AG04450 (cell line): ENCODE measurements at regions of chr4 and their contacts with region 1.

Region 1: DNA sequence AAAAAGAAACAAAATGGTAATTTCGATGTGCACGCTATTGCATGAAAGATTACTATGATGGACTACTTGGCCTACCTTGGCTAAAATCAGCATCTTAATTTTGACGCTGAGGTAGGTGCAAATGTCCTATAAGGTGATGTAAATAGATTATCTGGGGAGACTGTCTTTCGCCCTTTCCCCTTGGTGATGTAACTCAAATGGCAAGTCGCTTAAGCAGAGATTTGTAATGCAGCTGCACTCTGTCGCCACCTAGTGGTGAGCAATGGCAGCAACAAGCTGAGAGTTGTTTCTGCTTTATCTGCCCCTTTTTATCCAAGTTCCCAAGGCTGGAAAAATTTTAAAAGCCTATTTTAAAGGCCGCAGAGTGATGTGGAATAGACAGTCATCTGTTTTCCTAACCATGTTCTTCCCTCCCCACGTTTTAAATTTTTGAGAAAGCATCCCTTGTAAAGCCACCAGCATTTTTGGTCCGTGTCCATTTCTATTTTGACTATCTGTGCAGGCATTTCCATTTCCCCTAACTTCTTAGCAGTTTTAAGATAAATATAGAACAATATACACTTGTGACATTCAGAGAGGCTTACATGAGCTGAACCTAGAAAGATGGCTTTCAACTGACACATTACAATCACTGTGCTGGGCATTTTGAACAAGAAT is 62.4 kb upstream of the PDLIM3 start:
- DNase-seq: peak; percentile 55
- H3K4me3 ChIP-seq: no peak overlapping the region
- H3K27ac ChIP-seq: no peak overlapping the region
- H3K27me3 ChIP-seq: peaks cover 2% of the 10 kb centered on the region
- CTCF ChIP-seq: peak; percentile 99

Region 2: GRCh38 chr4:185464184-185464583 is 133.5 kb before region 1 on chr4:
- CTCF ChIA-PET with region 1: interaction called, 13 read pairs
- POLR2A ChIA-PET with region 1: interaction called, 3 read pairs
- DNase-seq: no peak
- H3K4me3 ChIP-seq: no peak overlapping the region
- H3K27ac ChIP-seq: no peak overlapping the region
- H3K27me3 ChIP-seq: peaks cover 4% of the 10 kb centered on the region
- CTCF ChIP-seq: no peak

Region 3: DNA sequence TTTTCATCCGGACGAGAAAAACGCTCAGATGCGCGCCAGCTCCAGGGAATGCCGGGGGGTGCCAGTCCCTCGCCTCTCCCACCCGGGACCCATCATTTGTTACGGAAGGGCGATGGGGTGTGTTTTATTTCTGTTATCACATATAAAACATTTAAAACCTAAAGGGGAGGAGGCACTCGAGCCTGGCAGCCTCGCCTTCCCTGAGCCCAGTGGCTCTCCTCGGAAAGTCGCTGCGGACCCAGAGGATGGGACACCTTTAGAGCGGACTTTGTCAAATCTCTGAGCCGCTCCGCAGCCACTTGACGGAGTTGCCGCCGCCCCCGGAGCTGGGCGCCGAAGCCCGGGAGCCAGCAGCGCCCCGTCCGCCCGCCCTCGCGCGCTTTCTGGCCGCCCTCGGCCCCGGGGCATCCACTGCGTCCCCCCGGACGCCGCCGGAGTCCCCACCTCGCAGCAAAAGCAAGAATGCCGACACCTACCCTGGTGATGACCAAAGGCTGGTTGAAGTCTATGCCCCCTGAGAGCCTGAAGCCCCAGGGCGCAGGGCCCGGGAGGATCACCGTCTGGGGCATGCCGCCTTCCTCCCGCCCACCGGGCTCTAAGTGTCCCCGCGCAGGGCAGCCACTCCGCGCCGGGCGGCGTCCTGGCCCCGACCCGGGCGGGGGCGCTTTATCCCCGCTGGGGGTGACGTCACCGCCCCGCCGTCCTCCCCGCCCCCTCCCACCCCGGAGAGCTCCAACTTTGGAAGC is 62.6 kb before region 1 on chr4 and contains the start of gene PDLIM3:
- CTCF ChIA-PET with region 1: interaction called, 17 read pairs
- POLR2A ChIA-PET with region 1: no interaction called
- DNase-seq: no peak
- H3K4me3 ChIP-seq: peak within 1 kb of the TSS; percentile 78
- H3K27ac ChIP-seq: no peak within 1 kb of the TSS
- H3K27me3 ChIP-seq: peaks cover 9% of the 10 kb centered on the region
- CTCF ChIP-seq: no peak
- polyA plus RNA-seq, gene PDLIM3: 15.2 and 15.4 TPM in 2 replicates

Region 4: DNA sequence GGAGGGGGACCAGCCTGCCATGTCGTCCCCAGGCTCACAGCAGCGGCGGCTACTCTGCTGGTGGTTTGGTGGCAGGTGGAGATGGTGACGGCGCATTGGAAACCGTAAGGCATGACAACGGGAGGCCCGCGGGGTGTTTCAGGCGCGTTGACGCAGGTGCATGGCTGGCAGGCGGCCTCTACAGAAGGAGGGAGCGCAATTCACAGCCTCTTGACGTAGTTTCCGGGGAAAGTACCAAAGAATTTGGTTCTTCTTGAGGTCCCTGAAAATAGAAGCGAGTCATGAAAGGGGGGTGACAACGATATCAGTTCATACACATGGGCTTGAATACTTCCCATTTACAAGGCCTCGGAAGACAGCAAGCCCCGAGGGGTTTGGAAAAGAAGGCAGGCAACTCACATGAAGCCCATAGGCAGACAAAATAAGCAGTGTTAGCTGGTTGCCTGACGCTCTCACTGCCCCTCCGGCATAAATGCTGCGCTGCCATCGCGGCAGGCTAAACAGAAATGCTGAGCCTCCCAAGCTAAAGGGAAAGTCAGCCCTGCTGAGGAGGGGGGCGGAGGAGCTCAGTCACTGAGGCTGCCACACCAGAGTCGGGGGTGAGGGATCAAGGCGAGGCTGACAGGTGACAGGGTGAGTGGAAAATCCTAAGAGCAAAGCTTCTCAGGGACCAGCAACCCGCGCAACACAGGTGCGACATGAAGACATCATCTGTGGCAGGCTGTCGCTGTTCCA is 10.1 kb before region 1 on chr4:
- CTCF ChIA-PET with region 1: interaction called, 50 read pairs
- POLR2A ChIA-PET with region 1: no interaction called
- DNase-seq: no peak
- H3K4me3 ChIP-seq: peak overlapping the region; percentile 27
- H3K27ac ChIP-seq: no peak overlapping the region
- H3K27me3 ChIP-seq: peaks cover 18% of the 10 kb centered on the region
- CTCF ChIP-seq: no peak

Region 5: DNA sequence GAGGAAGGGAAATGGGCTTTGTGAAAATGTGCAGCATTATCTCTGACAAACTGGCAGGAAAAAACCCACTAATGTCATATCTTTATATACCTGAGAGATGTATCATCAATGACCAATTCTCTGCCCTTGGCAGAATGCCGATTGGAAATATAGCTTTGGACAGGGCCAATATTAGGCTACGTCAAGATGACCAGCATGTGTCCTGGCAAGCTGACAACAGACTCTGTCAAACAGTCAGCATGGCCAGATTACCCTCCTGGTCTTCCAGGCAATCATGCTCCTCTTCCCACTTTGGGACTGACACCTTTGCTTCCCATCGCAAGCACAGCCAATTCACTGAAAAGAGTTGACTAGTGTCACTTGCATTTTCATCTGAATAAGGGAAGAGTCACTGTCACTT is 157.3 kb after region 1 on chr4:
- CTCF ChIA-PET with region 1: no interaction called
- POLR2A ChIA-PET with region 1: no interaction called
- DNase-seq: no peak
- H3K4me3 ChIP-seq: no peak overlapping the region
- H3K27ac ChIP-seq: peak overlapping the region; percentile 2
- H3K27me3 ChIP-seq: peaks cover 14% of the 10 kb centered on the region
- CTCF ChIP-seq: no peak

Region 6: DNA sequence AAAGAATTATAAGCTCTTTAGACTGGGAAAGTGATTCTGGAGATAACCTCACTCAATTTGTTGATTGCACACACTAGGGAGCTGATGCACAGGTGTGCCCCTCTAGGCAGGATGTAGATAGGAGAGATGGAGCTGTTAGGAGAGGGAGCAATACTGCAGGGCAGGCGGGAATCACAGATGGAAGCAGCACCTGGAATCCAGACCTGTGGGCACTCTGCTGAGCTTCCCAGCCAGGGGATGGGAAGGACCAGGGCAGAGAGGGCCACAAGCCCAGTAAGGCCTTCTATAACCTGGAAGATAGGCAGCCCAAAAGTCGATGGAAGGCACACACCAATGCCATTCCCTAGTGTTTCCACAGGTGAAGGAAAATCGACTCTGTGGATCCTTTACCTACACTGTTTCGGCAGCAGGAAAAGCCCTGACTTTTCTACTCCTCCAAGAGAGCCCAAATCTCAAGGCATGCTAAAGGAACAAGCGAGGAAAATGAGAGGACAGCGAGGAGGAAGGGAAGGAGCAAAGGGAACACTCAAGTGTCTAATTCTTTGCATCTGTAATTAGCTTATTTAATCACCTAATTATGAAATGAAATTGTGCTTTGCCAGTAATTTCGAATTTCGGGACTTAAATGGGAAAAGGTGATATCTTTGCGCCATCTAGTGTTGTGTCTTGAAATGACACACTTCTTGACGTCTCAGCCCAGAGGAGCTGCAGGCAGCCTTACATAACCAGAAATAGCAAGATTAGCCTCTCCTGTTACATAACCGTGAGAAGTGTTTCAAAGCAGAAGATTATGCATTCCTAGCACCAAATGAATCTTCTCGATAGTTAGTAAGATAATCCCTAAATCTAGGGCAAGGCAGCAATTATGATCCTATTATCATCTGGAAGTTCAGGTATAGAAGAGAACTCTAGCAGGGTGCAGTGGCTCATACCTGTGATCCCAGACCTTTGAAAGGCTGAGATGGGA is 440.3 kb after region 1 on chr4:
- CTCF ChIA-PET with region 1: interaction called, 23 read pairs
- POLR2A ChIA-PET with region 1: no interaction called
- DNase-seq: peak; percentile 60
- H3K4me3 ChIP-seq: no peak overlapping the region
- H3K27ac ChIP-seq: no peak overlapping the region
- H3K27me3 ChIP-seq: no peaks in the 10 kb centered on the region
- CTCF ChIP-seq: peak; percentile 72